ENCODE measurements at regions of chr3 and their contacts with region 1.

Region 1: GRCh38 chr3:187319699-187320302 is 28.3 kb upstream of the MASP1 start:
- DNase-seq: no peak
- H3K4me3 ChIP-seq: peak overlapping the region in 1 of 4 donors; percentile 37
- H3K27ac ChIP-seq: no peak overlapping the region
- H3K4me1 ChIP-seq: peaks cover 0 to 16% (median 10%) of the 10 kb centered on the region in 4 donors
- H3K27me3 ChIP-seq: peaks cover 0 to 16% (median 0%) of the 10 kb centered on the region in 4 donors
- CTCF ChIP-seq: peak; percentile 51 to 69 (median 52)
- EP300 ChIP-seq: no peak
- POLR2A ChIP-seq: no peak

Region 2: GRCh38 chr3:187215460-187215859 is 104.3 kb before region 1 on chr3:
- intact Hi-C with region 1: loop called (anchors 5 kb)
- DNase-seq: no peak
- H3K4me3 ChIP-seq: no peak overlapping the region
- H3K27ac ChIP-seq: no peak overlapping the region
- H3K4me1 ChIP-seq: peaks cover 6 to 28% (median 17%) of the 10 kb centered on the region in 4 donors
- H3K27me3 ChIP-seq: no peaks in the 10 kb centered on the region
- CTCF ChIP-seq: no peak
- EP300 ChIP-seq: no peak
- POLR2A ChIP-seq: no peak

Region 3: DNA sequence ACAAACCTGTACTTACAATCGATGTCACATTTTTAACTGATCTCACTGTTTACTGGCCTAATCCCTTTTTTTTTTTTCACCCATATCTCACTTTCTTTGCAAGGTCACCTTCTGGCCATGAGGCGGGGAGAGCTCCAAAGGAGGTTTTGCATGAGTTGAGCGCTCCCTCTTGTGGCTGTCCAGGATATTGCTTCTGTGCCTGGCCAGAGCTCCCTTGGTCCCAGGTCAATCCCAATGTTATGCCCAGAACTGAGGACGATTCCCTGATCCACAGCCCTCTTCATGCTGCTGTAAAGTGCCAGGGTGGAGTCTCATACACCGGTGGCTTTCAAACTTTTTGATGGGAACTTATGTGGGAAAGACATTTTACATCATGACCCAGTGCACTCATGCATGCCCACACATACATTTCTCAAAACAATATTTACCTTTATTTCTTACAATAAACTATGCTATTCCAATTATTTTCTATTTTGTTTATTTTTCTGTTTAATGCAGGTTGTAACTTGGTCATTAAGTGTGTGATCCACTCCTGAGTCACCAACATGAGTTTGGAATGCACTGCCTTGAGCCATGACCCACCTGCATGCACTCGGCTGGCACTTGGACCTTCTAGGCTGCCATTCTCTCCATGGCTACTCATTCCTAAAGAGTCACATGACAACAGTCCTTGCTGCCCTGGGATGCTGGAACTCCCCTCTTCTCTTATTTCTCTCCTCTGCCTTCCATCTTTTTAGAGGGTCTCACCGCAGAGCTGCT is 360.0 kb after region 1 on chr3:
- intact Hi-C with region 1: loop called (anchors 1 kb)
- DNase-seq: peak; percentile 92
- H3K4me3 ChIP-seq: no peak overlapping the region
- H3K27ac ChIP-seq: no peak overlapping the region
- H3K4me1 ChIP-seq: peaks cover 0 to 11% (median 4%) of the 10 kb centered on the region in 4 donors
- H3K27me3 ChIP-seq: no peaks in the 10 kb centered on the region
- CTCF ChIP-seq: peak; percentile 89 to 94 (median 94)
- EP300 ChIP-seq: no peak
- POLR2A ChIP-seq: no peak

Region 4: DNA sequence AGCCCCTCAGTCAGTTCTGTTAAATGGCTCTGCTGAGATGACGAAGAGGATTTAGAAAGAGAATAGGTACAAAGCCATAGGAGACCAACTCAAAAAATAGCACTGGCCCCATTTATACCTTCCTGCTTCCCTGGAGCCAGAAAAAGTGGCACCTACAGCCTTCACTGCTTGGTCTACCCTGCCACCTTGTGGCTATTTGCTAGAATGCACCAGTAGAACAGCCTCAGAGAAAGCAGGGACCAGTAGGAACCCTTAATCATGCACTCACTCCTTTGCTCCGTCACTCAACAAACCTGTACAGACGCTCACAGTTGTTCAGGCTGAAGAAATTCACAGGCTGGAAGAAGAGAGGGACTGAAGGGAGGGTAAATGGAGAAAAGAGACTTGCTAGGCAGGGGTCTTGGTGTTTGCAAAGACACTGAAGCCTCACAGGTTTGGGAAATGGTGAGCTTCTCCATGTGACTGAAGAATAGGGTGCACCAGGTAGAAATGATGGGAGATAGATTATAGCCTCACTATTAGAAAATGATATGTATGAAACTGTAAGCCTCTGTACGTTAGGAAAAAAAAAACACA is 394.7 kb after region 1 on chr3:
- intact Hi-C with region 1: loop called (anchors 2 kb)
- DNase-seq: no peak
- H3K4me3 ChIP-seq: no peak overlapping the region
- H3K27ac ChIP-seq: no peak overlapping the region
- H3K4me1 ChIP-seq: peaks cover 0 to 17% (median 8%) of the 10 kb centered on the region in 4 donors
- H3K27me3 ChIP-seq: no peaks in the 10 kb centered on the region
- CTCF ChIP-seq: peak; percentile 92 to 98 (median 95)
- EP300 ChIP-seq: no peak
- POLR2A ChIP-seq: no peak